Tibial artery (tissue), 4 donors: ENCODE measurements at regions of chr19 and their contacts with region 1.

Region 1: DNA sequence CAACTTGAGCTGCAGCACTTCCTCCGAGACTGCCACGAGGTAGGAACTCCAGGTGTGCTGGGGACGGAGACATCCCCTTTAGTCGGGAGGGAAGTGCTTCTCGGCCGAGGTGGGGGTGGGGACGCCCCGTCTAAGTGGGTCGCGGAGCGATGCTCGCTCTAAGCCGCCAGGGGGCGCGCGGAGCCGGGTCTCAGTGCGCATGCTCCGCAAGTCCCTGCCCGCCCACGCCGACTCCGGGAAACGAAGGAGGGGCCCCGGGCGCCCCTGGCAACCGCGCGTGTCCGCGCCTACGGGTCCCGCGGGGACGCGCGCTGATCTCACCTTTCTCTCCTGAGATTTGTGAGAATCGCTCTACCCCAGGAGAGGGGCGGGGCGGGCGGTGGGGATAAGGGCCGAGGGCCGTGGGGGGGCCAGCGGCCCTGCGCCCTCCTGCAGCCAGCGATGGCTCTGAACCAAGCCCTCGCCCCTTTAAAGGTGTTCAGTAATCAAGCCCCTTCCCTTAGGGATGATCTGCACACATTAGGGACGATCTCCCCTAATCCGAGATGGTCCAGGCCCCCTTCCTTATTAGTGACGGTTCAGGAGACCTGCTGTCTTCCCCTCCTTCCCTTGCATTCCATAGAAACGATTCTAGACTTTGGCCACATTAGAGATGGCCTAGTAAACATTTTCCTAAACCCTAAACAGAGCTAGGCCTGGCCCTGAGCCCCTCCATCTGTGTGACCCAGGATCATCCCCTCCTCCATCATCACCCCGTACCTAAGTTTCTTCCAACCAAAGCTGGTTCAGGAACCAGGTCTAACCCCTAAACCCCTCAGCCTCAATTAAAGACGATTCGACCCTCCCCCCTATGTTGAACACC is 47.3 kb upstream of the SHKBP1 start:
- DNase-seq: peak; percentile 76 to 88
- H3K4me3 ChIP-seq: peak overlapping the region; percentile 49 to 52
- H3K27ac ChIP-seq: peak overlapping the region in 1 of 2 donors; percentile 23
- H3K4me1 ChIP-seq: peaks cover 0 to 21% (median 15%) of the 10 kb centered on the region in 4 donors
- H3K27me3 ChIP-seq: peaks cover 0 to 5% of the 10 kb centered on the region in 2 donors
- CTCF ChIP-seq: peak; percentile 97 to 98

Region 2: DNA sequence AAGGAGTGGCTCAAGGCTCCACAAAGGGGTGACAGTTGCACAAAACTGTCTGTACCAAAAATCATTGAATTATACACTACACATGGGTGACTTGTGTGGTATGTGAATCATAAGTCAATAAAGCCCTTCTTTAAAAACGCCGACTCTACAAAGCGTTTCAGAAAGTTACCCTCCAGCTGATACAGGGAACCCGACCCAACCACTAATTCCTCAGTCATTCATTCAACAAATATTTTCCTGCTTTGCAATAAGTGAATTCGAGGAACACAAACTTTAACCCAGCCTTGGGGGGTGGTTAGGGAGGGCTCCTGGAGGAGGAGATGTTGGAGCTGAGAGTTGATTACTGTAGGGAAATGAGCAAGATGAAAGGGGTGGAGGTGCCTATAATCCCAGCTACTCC is 103.9 kb after region 1 on chr19:
- intact Hi-C with region 1: loop called (anchors 10 kb)
- DNase-seq: no peak
- H3K4me3 ChIP-seq: no peak overlapping the region
- H3K27ac ChIP-seq: peak overlapping the region; percentile 42 to 70
- H3K4me1 ChIP-seq: peaks cover 0 to 8% (median 4%) of the 10 kb centered on the region in 4 donors
- H3K27me3 ChIP-seq: no peaks in the 10 kb centered on the region
- CTCF ChIP-seq: no peak